ENCODE measurements at regions of chr18 and their contacts with region 1.

Region 1: GRCh38 chr18:64678048-64678447 is 529.2 kb upstream of the LINC00305 start:
- DNase-seq: no peak
- ATAC-seq: no peak
- H3K4me3 ChIP-seq: no peak overlapping the region
- H3K4me3 Mint-ChIP-seq: no peak overlapping the region
- H3K27ac ChIP-seq: no peak overlapping the region
- H3K27ac Mint-ChIP-seq: no peak overlapping the region
- H3K4me1 ChIP-seq: no peaks in the 10 kb centered on the region
- H3K4me1 Mint-ChIP-seq: no peaks in the 10 kb centered on the region
- H3K27me3 ChIP-seq: no peaks in the 10 kb centered on the region
- H3K27me3 Mint-ChIP-seq: no peaks in the 10 kb centered on the region
- CTCF ChIP-seq: no peak

Region 2: GRCh38 chr18:64618390-64618789 is 59.7 kb before region 1 on chr18:
- CTCF ChIA-PET with region 1: no interaction called
- POLR2A ChIA-PET with region 1: no interaction called
- intact Hi-C with region 1: no loop called
- DNase-seq: no peak
- ATAC-seq: no peak
- H3K4me3 ChIP-seq: no peak overlapping the region
- H3K4me3 Mint-ChIP-seq: no peak overlapping the region
- H3K27ac ChIP-seq: no peak overlapping the region
- H3K27ac Mint-ChIP-seq: no peak overlapping the region
- H3K4me1 ChIP-seq: no peaks in the 10 kb centered on the region
- H3K4me1 Mint-ChIP-seq: no peaks in the 10 kb centered on the region
- H3K27me3 ChIP-seq: no peaks in the 10 kb centered on the region
- H3K27me3 Mint-ChIP-seq: no peaks in the 10 kb centered on the region
- CTCF ChIP-seq: no peak

Region 3: GRCh38 chr18:64734063-64734462 is 56.0 kb after region 1 on chr18:
- CTCF ChIA-PET with region 1: no interaction called
- POLR2A ChIA-PET with region 1: no interaction called
- intact Hi-C with region 1: loop called in 1 of 2 experiments (anchors 10 kb)
- DNase-seq: no peak
- ATAC-seq: no peak
- H3K4me3 ChIP-seq: no peak overlapping the region
- H3K4me3 Mint-ChIP-seq: no peak overlapping the region
- H3K27ac ChIP-seq: no peak overlapping the region
- H3K27ac Mint-ChIP-seq: no peak overlapping the region
- H3K4me1 ChIP-seq: no peaks in the 10 kb centered on the region
- H3K4me1 Mint-ChIP-seq: no peaks in the 10 kb centered on the region
- H3K27me3 ChIP-seq: no peaks in the 10 kb centered on the region
- H3K27me3 Mint-ChIP-seq: no peaks in the 10 kb centered on the region
- CTCF ChIP-seq: no peak

Region 4: GRCh38 chr18:64765908-64766307 is 87.9 kb after region 1 on chr18:
- CTCF ChIA-PET with region 1: no interaction called
- POLR2A ChIA-PET with region 1: no interaction called
- intact Hi-C with region 1: no loop called
- DNase-seq: no peak
- ATAC-seq: no peak
- H3K4me3 ChIP-seq: no peak overlapping the region
- H3K4me3 Mint-ChIP-seq: no peak overlapping the region
- H3K27ac ChIP-seq: no peak overlapping the region
- H3K27ac Mint-ChIP-seq: no peak overlapping the region
- H3K4me1 ChIP-seq: no peaks in the 10 kb centered on the region
- H3K4me1 Mint-ChIP-seq: no peaks in the 10 kb centered on the region
- H3K27me3 ChIP-seq: no peaks in the 10 kb centered on the region
- H3K27me3 Mint-ChIP-seq: no peaks in the 10 kb centered on the region
- CTCF ChIP-seq: no peak

Measured in CD8-positive, alpha-beta T cell (primary cell).